CD4-positive, alpha-beta memory T cell (primary cell): ENCODE measurements at regions of chr1 and their contacts with region 1.

Region 1: DNA sequence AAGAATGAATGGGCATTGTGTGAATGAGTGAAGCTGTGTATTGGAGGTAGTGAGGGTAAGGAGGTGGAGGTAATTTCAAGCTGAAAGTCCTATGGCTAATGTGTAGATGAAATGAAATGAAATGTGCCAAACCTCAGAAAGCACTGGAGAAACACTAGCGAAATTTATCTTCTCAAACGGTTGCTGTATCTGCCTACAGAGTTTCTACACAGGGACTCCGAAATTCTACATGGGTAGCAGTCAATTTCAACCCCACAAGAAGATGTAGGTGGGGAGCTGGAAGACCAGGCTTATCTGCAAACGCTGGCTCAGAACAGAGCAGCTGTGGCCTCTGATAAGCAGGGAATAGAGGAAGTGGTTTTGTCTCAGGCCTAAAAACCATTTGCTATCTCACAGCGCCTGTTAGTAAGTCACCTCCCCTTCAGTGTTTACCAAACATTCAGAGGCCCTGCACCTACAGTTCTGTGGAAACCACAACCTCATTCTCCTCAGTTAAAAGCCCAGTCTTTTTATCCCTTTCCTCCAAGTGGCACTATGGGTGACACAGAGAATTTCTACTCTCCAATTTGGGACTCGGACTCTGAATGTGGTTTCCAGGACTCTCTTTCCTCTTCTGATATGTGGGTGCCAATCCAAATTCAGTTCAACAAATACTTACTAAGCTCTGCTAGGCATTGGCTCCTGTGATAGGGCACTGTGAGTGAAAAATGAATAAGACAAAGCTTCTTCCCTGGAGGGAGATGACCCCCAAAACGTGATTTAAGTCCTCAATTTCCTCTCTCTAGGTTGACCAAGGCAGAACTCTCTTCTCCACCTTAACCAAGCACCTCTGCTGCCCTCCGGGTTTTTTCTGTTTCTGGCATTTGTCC is 17.2 kb upstream of the SLAMF6 start:
- DNase-seq: peak; percentile 72 to 83 (median 75)
- H3K4me3 ChIP-seq: peak overlapping the region in 1 of 2 donors; percentile 3
- H3K4me3 Mint-ChIP-seq: peak overlapping the region; percentile 36 to 90 (median 81)
- H3K27ac ChIP-seq: peak overlapping the region; percentile 51
- H3K27ac Mint-ChIP-seq: peak overlapping the region; percentile 87 to 94 (median 92)
- H3K4me1 ChIP-seq: peaks cover 65% of the 10 kb centered on the region
- H3K4me1 Mint-ChIP-seq: peaks cover 46 to 67% (median 55%) of the 10 kb centered on the region in 4 donors
- H3K27me3 ChIP-seq: no peaks in the 10 kb centered on the region
- H3K27me3 Mint-ChIP-seq: no peaks in the 10 kb centered on the region

Region 2: DNA sequence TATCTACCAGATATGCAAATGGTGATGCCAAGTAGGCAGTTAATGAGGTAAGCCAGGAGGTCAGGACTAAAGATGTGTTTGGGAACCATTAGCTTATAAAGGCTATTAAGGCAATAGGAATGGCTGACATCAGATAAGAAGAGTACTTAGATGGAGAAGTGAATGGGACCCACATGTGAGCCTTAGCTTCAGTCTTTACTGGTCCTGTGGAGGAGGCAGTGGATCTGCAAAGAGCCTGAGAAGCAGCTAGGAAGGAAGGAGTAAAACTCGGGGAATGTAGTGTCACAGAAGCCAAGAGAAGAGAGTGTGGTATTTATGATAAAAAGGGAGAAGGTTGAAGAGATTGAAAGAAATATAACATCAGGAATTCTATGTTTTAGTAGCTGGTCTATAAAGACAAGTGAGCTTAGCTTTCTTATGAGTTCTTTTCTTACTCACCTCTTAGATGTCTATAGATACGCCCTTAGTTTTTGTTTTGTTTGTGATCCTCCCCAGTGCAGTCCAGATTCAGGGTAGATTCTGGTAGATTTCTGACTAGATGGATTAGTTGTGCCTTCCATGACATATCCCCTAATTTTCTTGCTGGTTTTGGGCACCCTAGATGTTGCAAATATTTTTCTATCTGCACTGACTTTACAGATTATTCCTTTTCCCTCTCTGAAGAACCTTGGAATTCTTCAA is 56.6 kb before region 1 on chr1:
- CTCF ChIA-PET with region 1: interaction called, 5 read pairs
- POLR2A ChIA-PET with region 1: interaction called, 10 read pairs
- intact Hi-C with region 1: no loop called
- DNase-seq: no peak
- H3K4me3 ChIP-seq: no peak overlapping the region
- H3K4me3 Mint-ChIP-seq: peak overlapping the region in 1 of 8 donors; percentile 26
- H3K27ac ChIP-seq: no peak overlapping the region
- H3K27ac Mint-ChIP-seq: peak overlapping the region; percentile 20 to 89 (median 60)
- H3K4me1 ChIP-seq: peaks cover 24% of the 10 kb centered on the region
- H3K4me1 Mint-ChIP-seq: peaks cover 36 to 53% (median 44%) of the 10 kb centered on the region in 4 donors
- H3K27me3 ChIP-seq: no peaks in the 10 kb centered on the region
- H3K27me3 Mint-ChIP-seq: no peaks in the 10 kb centered on the region

Region 3: DNA sequence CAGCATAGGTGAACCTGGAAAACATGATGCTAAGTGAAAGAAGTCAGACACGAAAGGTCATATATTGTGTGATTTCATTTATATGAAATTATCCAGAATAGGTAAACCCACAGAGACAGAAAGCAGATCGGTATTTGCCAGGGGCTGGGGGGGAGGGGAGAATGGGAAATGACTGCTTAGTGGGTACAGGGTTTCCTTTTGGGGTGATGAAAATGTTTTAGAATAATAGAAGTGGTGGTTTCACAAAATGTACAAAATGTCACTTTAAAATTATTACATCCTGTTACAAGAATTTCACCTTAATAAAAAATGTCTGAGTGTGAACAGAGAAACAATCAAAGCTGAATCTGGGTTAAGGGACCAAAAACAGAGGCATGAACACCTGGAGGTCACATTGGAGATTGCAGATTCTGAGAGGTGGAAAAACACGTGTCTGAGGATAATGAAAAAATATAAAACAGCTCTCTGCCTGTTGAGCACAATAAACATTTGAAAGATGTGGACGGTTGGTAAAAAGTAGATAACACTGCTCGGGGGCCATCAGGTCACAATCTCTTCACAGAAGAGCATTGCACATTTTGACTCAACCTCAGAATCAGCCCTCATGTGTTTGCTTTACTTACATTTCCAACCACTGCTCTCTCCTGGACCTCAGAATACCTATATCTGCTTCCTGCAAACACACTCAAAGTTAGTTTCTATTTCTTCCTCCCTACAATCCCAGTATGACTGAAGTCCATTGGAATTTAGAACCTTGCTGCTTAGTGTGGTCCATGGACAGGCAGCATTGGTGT is 20.4 kb before region 1 on chr1:
- CTCF ChIA-PET with region 1: interaction called, 14 read pairs
- POLR2A ChIA-PET with region 1: interaction called, 46 read pairs
- intact Hi-C with region 1: loop called (anchors 1 kb)
- DNase-seq: peak; percentile 49 to 62 (median 56)
- H3K4me3 ChIP-seq: peak overlapping the region; percentile 69 to 71
- H3K4me3 Mint-ChIP-seq: peak overlapping the region; percentile 91 to 98 (median 95)
- H3K27ac ChIP-seq: peak overlapping the region; percentile 60
- H3K27ac Mint-ChIP-seq: peak overlapping the region; percentile 84 to 98 (median 95)
- H3K4me1 ChIP-seq: peaks cover 80% of the 10 kb centered on the region
- H3K4me1 Mint-ChIP-seq: peaks cover 78 to 97% (median 81%) of the 10 kb centered on the region in 4 donors
- H3K27me3 ChIP-seq: no peaks in the 10 kb centered on the region
- H3K27me3 Mint-ChIP-seq: no peaks in the 10 kb centered on the region

Region 4: GRCh38 chr1:160558660-160559380 is 18.6 kb after region 1 on chr1:
- CTCF ChIA-PET with region 1: interaction called, 133 read pairs
- POLR2A ChIA-PET with region 1: interaction called, 639 read pairs
- intact Hi-C with region 1: loop called (anchors 2 kb)
- DNase-seq: no peak
- H3K4me3 ChIP-seq: peak overlapping the region; percentile 21 to 42
- H3K4me3 Mint-ChIP-seq: peak overlapping the region; percentile 78 to 92 (median 82)
- H3K27ac ChIP-seq: peak overlapping the region; percentile 54
- H3K27ac Mint-ChIP-seq: peak overlapping the region; percentile 84 to 98 (median 93)
- H3K4me1 ChIP-seq: peaks cover 79% of the 10 kb centered on the region
- H3K4me1 Mint-ChIP-seq: peaks cover 56 to 80% (median 66%) of the 10 kb centered on the region in 4 donors
- H3K27me3 ChIP-seq: no peaks in the 10 kb centered on the region
- H3K27me3 Mint-ChIP-seq: no peaks in the 10 kb centered on the region

Region 5: DNA sequence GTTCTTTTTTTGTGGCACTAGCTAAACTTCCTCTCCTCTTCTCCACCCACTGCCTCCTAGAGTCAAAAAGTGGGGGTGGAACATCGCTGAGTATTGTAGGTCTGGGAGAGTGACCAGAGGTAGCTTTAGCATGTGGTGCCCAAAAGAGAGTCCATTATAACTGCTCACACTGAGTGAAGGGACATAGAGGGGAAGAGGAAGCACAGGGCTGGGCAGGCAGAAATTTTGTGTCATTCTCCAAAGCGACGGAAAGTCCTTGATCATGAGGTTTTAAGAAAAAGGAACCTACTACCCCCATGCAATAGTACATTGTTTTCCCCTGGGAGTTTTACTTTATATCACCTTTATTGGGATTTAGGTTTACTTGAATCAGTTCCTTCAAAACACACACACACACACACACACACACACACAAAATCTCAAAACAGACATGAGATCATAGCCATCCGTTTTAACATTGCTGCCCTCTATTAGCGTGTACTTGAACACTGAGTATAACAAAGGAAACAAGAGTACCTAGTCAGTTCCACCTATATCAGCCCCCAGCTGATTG is 35.0 kb after region 1 on chr1:
- CTCF ChIA-PET with region 1: interaction called, 24 read pairs
- POLR2A ChIA-PET with region 1: interaction called, 639 read pairs
- intact Hi-C with region 1: loop called (anchors 2 kb)
- DNase-seq: peak in 2 of 5 donors; percentile 26 to 49
- H3K4me3 ChIP-seq: peak overlapping the region; percentile 15 to 80
- H3K4me3 Mint-ChIP-seq: peak overlapping the region; percentile 83 to 98 (median 94)
- H3K27ac ChIP-seq: peak overlapping the region; percentile 68
- H3K27ac Mint-ChIP-seq: peak overlapping the region; percentile 89 to 95 (median 92)
- H3K4me1 ChIP-seq: peaks cover 83% of the 10 kb centered on the region
- H3K4me1 Mint-ChIP-seq: peaks cover 64 to 94% (median 73%) of the 10 kb centered on the region in 4 donors
- H3K27me3 ChIP-seq: no peaks in the 10 kb centered on the region
- H3K27me3 Mint-ChIP-seq: no peaks in the 10 kb centered on the region